CD4-positive, alpha-beta T cell (primary cell): ENCODE measurements at regions of chr6 and their contacts with region 1.

Region 1: DNA sequence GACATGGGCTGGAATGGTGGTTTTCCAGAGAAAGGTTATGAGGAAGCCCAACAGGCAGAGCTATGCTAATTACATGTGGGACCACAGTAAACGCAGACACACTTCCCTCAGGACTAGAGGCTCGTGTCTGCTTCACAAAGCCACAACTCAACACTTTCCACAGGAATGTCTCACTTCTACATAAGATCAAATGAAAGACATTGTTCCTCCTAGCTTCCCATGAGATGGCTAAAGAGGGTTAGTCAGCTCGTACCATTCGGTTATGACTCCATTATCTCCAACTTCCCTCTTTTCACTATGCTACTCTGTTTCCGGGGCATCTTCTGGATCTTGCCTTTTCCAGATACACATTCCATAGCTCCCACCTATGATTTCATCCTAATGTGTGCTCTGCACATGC is 29.1 kb upstream of the ZC3H12D start:
- DNase-seq: peak in 1 of 14 experiments; percentile 27
- ATAC-seq: no peak
- H3K4me3 ChIP-seq: no peak overlapping the region
- H3K4me3 Mint-ChIP-seq: no peak overlapping the region
- H3K27ac ChIP-seq: no peak overlapping the region
- H3K27ac Mint-ChIP-seq: no peak overlapping the region
- H3K4me1 ChIP-seq: no peaks in the 10 kb centered on the region
- H3K4me1 Mint-ChIP-seq: peaks cover 37% of the 10 kb centered on the region
- H3K27me3 ChIP-seq: no peaks in the 10 kb centered on the region
- H3K27me3 Mint-ChIP-seq: no peaks in the 10 kb centered on the region
- CTCF ChIP-seq: no peak

Region 2: GRCh38 chr6:149082286-149082707 is 431.6 kb before region 1 on chr6:
- CTCF ChIA-PET with region 1: interaction called, 4 read pairs
- POLR2A ChIA-PET with region 1: interaction called, 3 read pairs
- intact Hi-C with region 1: loop called (anchors 1 to 2 kb)
- DNase-seq: peak; percentile 76 to 95 (median 86)
- ATAC-seq: peak; percentile 92
- H3K4me3 ChIP-seq: no peak overlapping the region
- H3K4me3 Mint-ChIP-seq: no peak overlapping the region
- H3K27ac ChIP-seq: no peak overlapping the region
- H3K27ac Mint-ChIP-seq: no peak overlapping the region
- H3K4me1 ChIP-seq: peaks cover 15% of the 10 kb centered on the region
- H3K4me1 Mint-ChIP-seq: peaks cover 39% of the 10 kb centered on the region
- H3K27me3 ChIP-seq: no peaks in the 10 kb centered on the region
- H3K27me3 Mint-ChIP-seq: no peaks in the 10 kb centered on the region
- CTCF ChIP-seq: peak; percentile 90

Region 3: DNA sequence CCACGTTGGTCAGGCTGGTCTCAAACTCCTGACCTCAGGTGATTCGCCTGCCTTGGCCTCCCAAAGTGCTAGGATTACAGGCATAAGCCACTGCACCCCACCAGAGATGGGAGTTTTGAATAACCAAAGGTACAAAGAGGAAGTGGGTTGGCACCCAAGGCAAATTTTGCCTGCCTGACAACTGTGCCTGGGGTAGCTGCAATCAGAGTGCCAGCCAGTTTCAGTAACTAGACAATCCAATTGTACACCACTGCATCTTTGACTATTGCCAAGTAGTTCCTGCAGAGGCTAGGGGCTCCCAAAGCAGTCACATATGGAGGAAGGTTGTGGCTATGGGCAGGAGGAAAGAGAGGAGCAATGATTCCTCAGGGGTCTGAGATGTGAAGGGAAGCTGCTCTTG is 45.7 kb before region 1 on chr6:
- CTCF ChIA-PET with region 1: interaction called, 13 read pairs
- POLR2A ChIA-PET with region 1: interaction called, 4 read pairs
- intact Hi-C with region 1: loop called (anchors 1 to 10 kb)
- DNase-seq: no peak
- ATAC-seq: no peak
- H3K4me3 ChIP-seq: no peak overlapping the region
- H3K4me3 Mint-ChIP-seq: peak overlapping the region; percentile 44
- H3K27ac ChIP-seq: no peak overlapping the region
- H3K27ac Mint-ChIP-seq: peak overlapping the region; percentile 55
- H3K4me1 ChIP-seq: peaks cover 82% of the 10 kb centered on the region
- H3K4me1 Mint-ChIP-seq: peaks cover 56% of the 10 kb centered on the region
- H3K27me3 ChIP-seq: no peaks in the 10 kb centered on the region
- H3K27me3 Mint-ChIP-seq: no peaks in the 10 kb centered on the region
- CTCF ChIP-seq: no peak

Region 4: GRCh38 chr6:149484733-149485700 is 28.9 kb before region 1 on chr6 and contains the start of gene ZC3H12D:
- CTCF ChIA-PET with region 1: interaction called, 24 read pairs
- POLR2A ChIA-PET with region 1: interaction called, 21 read pairs
- intact Hi-C with region 1: loop called (anchors 1 kb)
- DNase-seq: peak; percentile 74 to 95 (median 81)
- ATAC-seq: peak; percentile 77
- H3K4me3 ChIP-seq: peak within 1 kb of the TSS; percentile 68
- H3K4me3 Mint-ChIP-seq: peak within 1 kb of the TSS; percentile 92
- H3K27ac ChIP-seq: peak within 1 kb of the TSS; percentile 91 to 97
- H3K27ac Mint-ChIP-seq: peak within 1 kb of the TSS; percentile 99
- H3K4me1 ChIP-seq: peaks cover 75% of the 10 kb centered on the region
- H3K4me1 Mint-ChIP-seq: peaks cover 61% of the 10 kb centered on the region
- H3K27me3 ChIP-seq: no peaks in the 10 kb centered on the region
- H3K27me3 Mint-ChIP-seq: no peaks in the 10 kb centered on the region
- CTCF ChIP-seq: peak; percentile 76
- total RNA-seq, gene ZC3H12D: 70.2 to 71.0 TPM

Region 5: DNA sequence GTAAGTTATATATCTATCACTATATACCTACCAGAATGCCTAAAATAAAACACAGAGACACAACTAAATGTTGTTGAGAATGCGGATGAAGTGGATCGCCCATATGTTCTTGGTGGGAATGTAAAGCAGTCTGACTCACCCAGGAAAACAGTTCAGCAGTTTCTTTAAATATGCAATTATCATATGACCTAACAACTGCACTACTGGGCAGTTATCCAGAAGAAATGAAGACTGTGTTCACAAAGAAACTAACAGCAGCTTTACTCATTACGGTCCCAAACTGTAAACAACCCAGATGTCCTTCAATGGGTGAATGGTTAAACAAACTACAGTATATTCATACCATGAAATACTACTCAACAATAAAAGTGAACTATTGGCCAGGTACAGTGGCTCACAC is 14.8 kb before region 1 on chr6:
- CTCF ChIA-PET with region 1: interaction called, 22 read pairs
- POLR2A ChIA-PET with region 1: interaction called, 79 read pairs
- intact Hi-C with region 1: no loop called
- DNase-seq: no peak
- ATAC-seq: no peak
- H3K4me3 ChIP-seq: no peak overlapping the region
- H3K4me3 Mint-ChIP-seq: no peak overlapping the region
- H3K27ac ChIP-seq: no peak overlapping the region
- H3K27ac Mint-ChIP-seq: peak overlapping the region; percentile 69
- H3K4me1 ChIP-seq: peaks cover 33% of the 10 kb centered on the region
- H3K4me1 Mint-ChIP-seq: peaks cover 62% of the 10 kb centered on the region
- H3K27me3 ChIP-seq: no peaks in the 10 kb centered on the region
- H3K27me3 Mint-ChIP-seq: no peaks in the 10 kb centered on the region
- CTCF ChIP-seq: no peak